Activated T-helper 1 cell treated with anti-CD3 and anti-CD28 coated beads, Interleukin-12 subunit alpha, Interleukin-12 subunit beta, Interleukin-2, Interleukin-4 antibody, amounts not matched to agents 30 ng/mL and 10 ng/mL and 1 ng/mL, durations not matched to agents 14 hours and 24 hours and 36 hours (primary cell): ENCODE measurements at regions of chr11 and their contacts with region 1.

Region 1: GRCh38 chr11:83193315-83194280 is at the start of gene ANKRD42:
- DNase-seq: peak; percentile 83
- H3K4me3 Mint-ChIP-seq: peak within 1 kb of the TSS; percentile 93
- H3K27ac Mint-ChIP-seq: peak within 1 kb of the TSS; percentile 94
- H3K4me1 Mint-ChIP-seq: peaks cover 40% of the 10 kb centered on the region
- H3K27me3 Mint-ChIP-seq: no peaks in the 10 kb centered on the region
- total RNA-seq, gene ANKRD42: 3.3 and 3.5 TPM in 2 replicates

Region 2: DNA sequence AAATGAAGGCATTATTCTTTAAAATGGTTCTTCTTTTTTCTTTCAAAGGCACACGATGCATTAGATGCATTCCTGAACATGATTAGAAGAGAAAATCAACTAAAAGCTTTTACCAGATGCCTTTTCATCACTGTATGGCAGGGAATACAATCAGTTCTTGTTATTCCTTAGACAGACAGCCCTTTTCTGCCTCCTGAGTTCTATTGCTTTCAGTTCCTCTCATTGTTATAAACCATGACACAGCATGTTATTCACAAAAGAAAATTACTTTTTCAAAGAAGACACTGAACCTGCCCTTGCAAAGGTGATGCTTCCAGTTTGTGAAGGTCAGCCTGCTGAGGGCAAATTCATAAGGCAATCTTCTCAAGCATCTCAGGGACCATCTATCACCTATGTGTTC is 530.1 kb before region 1 on chr11:
- intact Hi-C with region 1: no loop called
- DNase-seq: no peak
- H3K4me3 Mint-ChIP-seq: no peak overlapping the region
- H3K27ac Mint-ChIP-seq: no peak overlapping the region
- H3K4me1 Mint-ChIP-seq: no peaks in the 10 kb centered on the region
- H3K27me3 Mint-ChIP-seq: no peaks in the 10 kb centered on the region

Region 3: GRCh38 chr11:82900277-82901164 is 293.1 kb before region 1 on chr11 and contains the start of gene PRCP:
- intact Hi-C with region 1: loop called (anchors 1 kb)
- DNase-seq: peak; percentile 93
- H3K4me3 Mint-ChIP-seq: peak within 1 kb of the TSS; percentile 99
- H3K27ac Mint-ChIP-seq: peak within 1 kb of the TSS; percentile 100
- H3K4me1 Mint-ChIP-seq: peaks cover 70% of the 10 kb centered on the region
- H3K27me3 Mint-ChIP-seq: no peaks in the 10 kb centered on the region
- total RNA-seq, gene PRCP: 22.7 and 24.0 TPM in 2 replicates

Region 4: GRCh38 chr11:82959987-82960778 is 233.4 kb before region 1 on chr11:
- intact Hi-C with region 1: loop called (anchors 1 kb)
- DNase-seq: peak; percentile 42
- H3K4me3 Mint-ChIP-seq: peak overlapping the region; percentile 68
- H3K27ac Mint-ChIP-seq: peak overlapping the region; percentile 91
- H3K4me1 Mint-ChIP-seq: peaks cover 59% of the 10 kb centered on the region
- H3K27me3 Mint-ChIP-seq: no peaks in the 10 kb centered on the region

Region 5: DNA sequence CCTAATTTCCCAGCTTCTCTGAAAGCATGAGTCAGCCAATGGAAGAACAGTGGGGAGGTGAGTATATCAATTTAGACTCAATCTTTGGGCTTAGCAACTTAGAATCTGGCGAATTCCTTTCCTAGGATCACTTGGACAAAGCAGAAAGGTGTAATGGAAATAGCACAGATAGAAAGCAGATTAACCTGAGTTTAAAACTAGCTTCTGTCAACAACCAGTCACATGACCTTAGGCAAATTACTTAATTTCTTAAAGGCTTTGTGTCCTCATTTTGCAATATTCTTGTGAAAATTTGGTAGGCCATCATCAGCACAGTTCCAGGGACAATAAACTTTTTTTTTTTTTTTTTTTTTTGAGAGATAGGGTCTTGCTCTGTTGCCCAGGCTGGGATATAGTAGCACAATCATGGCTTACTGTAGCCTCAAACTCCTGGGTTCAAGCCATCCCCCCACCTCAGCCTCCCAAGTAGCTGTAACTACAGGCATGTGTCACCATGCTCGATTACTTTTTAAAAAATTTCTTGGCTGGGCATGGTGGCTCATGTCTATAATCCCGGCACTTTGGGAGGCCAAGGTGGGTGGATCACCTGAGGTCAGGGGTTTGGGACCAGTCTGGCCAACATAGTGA is 77.5 kb before region 1 on chr11:
- intact Hi-C with region 1: loop called (anchors 2 kb)
- DNase-seq: no peak
- H3K4me3 Mint-ChIP-seq: peak overlapping the region; percentile 32
- H3K27ac Mint-ChIP-seq: no peak overlapping the region
- H3K4me1 Mint-ChIP-seq: peaks cover 40% of the 10 kb centered on the region
- H3K27me3 Mint-ChIP-seq: no peaks in the 10 kb centered on the region

Region 6: DNA sequence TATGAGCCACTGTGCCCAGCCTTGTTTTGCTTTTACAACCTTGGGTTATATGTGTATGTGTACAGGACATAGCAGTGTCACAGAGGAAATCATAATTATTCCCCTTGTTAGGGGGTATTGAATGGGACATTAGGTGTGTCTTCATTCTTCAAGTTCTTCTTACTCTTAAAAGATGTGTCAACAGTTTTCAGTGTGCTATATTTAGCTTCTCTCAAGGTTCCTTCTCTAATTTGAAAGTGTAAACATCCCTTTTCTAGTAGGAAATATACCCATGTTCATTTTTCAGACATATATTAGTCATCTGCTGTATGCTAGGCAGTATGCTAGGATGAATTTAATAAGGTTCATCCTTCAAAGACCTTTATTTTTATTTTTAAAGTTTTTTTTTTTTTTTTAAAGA is 19.6 kb before region 1 on chr11:
- intact Hi-C with region 1: loop called (anchors 2 kb)
- DNase-seq: no peak
- H3K4me3 Mint-ChIP-seq: no peak overlapping the region
- H3K27ac Mint-ChIP-seq: no peak overlapping the region
- H3K4me1 Mint-ChIP-seq: peaks cover 63% of the 10 kb centered on the region
- H3K27me3 Mint-ChIP-seq: no peaks in the 10 kb centered on the region

Region 7: DNA sequence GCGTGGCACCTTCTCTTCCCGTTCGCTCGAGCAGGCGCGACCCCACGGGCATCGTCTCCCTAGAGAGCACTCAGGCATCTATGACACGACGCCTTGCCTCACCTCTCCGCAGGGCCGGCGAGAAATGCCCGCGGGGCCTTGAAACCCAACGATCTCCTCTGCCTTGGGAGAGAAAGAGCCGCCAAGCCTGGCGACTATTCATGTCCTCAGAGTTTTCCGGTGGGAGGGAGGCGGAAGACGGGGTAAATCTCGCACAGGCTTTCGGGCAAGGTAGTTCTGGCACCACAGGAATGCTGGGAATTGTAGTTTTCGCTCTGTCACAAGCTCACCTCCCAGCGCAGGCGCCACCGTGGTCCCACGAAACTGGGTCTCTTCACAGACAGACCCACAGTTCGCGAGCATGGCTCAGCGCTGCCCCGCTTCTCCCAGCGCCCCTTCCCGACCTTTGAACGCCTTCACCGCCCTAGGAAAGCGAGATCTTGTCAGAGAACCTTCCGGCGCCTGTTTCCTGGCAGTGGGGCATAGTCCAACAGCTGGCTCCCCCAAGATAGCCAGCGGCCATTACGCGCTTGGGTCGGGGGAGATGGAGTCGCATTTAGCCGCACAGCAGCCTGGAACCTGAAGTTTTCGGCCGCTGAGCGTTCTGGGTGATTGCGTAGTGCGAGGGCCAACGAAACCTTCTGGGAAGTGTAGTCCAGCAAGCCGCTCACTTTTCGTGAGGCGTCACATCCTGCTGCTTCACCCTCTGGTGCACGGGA is 92.4 kb after region 1 on chr11 and contains the start of gene CCDC90B:
- intact Hi-C with region 1: loop called (anchors 1 kb)
- DNase-seq: peak; percentile 91
- H3K4me3 Mint-ChIP-seq: peak within 1 kb of the TSS; percentile 96
- H3K27ac Mint-ChIP-seq: peak within 1 kb of the TSS; percentile 95
- H3K4me1 Mint-ChIP-seq: peaks cover 21% of the 10 kb centered on the region
- H3K27me3 Mint-ChIP-seq: peaks cover 4% of the 10 kb centered on the region
- total RNA-seq, gene CCDC90B: 24.2 and 24.5 TPM in 2 replicates

Region 8: DNA sequence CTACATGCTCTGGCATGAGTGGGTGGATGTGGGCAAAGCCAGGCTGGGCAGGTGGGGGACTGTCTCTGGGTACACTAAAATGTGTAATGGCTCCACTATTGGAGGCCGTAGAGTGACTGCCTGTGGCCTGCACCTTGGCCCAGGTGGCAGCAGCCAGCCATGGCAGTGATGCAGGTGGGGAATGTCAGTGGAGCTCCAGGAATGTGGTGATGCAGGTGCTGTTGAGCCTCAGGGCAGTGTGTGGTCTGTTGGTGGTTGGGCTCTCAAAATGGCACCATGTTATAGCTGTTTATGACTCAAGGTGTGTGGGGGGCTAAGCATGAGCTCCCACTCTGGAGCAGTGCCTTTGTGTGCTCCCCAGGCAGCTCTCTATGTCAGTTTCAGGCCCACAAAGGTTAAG is 132.7 kb after region 1 on chr11:
- intact Hi-C with region 1: no loop called
- DNase-seq: no peak
- H3K4me3 Mint-ChIP-seq: no peak overlapping the region
- H3K27ac Mint-ChIP-seq: no peak overlapping the region
- H3K4me1 Mint-ChIP-seq: no peaks in the 10 kb centered on the region
- H3K27me3 Mint-ChIP-seq: peaks cover 13% of the 10 kb centered on the region